ENCODE measurements at regions of chr16 and their contacts with region 1.

Region 1: DNA sequence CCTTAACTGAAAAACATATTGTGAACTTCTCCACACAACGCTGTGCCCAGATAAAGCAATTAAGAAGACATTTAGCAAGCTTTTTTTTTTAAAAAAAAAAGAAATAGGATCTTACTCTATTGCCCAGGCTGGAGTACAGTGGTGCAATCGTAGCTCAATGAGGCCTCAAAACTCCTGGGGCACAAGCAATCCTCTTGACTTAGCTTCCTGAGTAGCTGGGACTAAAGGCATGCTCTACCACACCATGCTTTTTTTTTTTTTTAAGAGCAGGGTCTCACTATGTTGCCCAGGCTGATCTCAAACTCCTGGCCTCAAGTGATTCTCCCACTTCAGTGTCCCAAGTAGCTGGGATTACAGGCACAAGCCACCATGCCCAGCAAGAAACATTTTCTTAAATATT is 20.1 kb downstream of the AP1G1 start:
- DNase-seq: no peak
- H3K4me3 ChIP-seq: no peak overlapping the region
- CTCF ChIP-seq: no peak

Region 2: GRCh38 chr16:71311553-71312158 is 476.9 kb before region 1 on chr16:
- in situ Hi-C with region 1: no loop called
- DNase-seq: no peak
- H3K4me3 ChIP-seq: no peak overlapping the region
- CTCF ChIP-seq: peak; percentile 69

Region 3: GRCh38 chr16:71693164-71693563 is 95.4 kb before region 1 on chr16:
- in situ Hi-C with region 1: no loop called
- DNase-seq: no peak
- H3K4me3 ChIP-seq: no peak overlapping the region
- CTCF ChIP-seq: no peak

Region 4: GRCh38 chr16:71734511-71734910 is 54.1 kb before region 1 on chr16:
- in situ Hi-C with region 1: loop called (anchors 5 kb)
- DNase-seq: no peak
- H3K4me3 ChIP-seq: no peak overlapping the region
- CTCF ChIP-seq: no peak

Region 5: GRCh38 chr16:71845639-71846430 is 57.3 kb after region 1 on chr16 and contains the start of gene ATXN1L:
- in situ Hi-C with region 1: loop called (anchors 5 kb)
- DNase-seq: peak; percentile 71
- H3K4me3 ChIP-seq: peak within 1 kb of the TSS; percentile 98
- CTCF ChIP-seq: no peak